PC-9 (cell line): ENCODE measurements at regions of chr1 and their contacts with region 1.

Region 1: DNA sequence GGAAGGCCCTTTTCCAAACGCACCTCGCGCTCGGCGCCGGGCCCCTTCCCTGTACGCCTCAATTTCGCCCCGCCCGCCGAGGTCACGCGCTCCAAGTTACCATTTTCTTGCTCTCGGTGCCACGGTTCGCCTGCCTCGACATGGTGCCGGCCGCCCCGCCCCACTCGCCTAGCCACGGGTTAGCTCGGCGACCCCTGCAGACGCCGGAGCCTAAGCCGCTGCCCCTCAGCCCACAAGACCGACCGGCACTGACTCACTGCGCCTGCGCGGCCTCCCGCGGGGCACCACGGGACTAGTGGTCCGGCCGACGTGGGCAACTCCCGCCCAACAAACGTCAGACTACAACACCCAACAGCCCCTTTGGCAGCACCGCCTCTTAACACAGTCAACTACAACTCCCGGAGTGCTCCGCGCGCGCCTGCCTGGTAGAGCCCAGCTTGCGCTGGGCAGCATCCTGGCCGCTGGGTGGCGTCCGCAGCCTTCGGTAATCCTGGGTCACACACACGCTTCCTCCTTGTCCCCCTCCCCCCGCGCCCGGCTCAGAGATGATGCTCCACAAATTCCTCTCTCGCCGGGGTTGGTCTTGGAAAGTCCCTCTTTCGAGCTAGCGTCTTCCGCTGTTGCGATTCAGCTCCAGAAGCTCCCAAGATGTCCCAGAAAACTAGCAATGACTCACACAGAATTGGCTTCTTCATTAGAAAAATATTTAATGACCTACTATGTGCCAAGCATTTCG is at the start of gene TRAPPC3:
- DNase-seq: peak; percentile 98 to 100
- H3K4me3 ChIP-seq: peak within 1 kb of the TSS; percentile 67
- H3K27ac ChIP-seq: peak within 1 kb of the TSS; percentile 95
- H3K4me1 ChIP-seq: peaks cover 34% of the 10 kb centered on the region
- H3K27me3 ChIP-seq: no peaks in the 10 kb centered on the region
- CTCF ChIP-seq: peak; percentile 89
- total RNA-seq, gene TRAPPC3: 112 and 116 TPM in 2 replicates

Region 2: DNA sequence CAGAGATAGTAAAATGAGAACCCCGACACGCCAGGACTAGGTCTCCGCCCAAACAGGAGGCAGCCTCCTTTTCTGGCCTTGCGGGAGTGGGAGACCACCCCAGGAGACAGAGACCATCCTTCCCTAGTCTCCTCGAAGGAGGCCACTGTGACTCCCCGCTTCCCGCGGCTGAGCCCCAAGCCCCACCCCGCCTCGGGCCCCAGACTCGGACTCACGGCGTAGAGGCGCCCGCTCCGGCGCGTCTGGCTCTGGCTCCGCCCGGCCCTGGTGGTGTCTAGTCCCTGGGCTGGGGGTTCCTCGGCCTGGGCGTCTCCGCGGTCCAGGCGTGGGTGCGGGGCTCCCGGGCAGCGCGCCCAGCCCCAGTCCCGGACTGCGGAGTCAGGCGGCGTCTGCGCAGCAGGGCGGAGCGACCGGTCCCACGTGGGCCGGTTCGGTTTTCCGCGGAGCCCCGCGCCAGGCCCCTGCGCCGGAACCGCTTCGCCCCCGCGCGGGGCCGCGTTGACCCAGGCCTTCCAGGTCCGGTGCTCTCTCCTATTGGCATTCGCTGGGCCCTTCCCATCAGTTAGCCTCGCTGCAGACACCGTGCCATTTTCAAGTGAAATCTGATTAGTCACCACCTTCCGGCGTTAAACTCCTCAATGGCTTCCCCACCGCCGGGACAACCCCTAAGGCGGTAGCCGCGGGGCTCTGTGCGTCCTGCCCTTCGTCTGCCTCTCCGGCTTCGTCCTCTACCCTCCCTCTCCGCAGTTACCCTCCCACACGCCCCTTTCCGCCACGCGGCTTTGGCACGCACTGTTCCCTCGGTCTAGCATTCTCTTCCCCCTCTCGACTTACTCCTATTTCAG is 430.7 kb before region 1 on chr1 and contains the start of gene C1orf216:
- CTCF ChIA-PET with region 1: no interaction called
- POLR2A ChIA-PET with region 1: no interaction called
- intact Hi-C with region 1: no loop called
- DNase-seq: peak in 1 of 2 experiments; percentile 68
- H3K4me3 ChIP-seq: peak within 1 kb of the TSS; percentile 75
- H3K27ac ChIP-seq: no peak within 1 kb of the TSS
- H3K4me1 ChIP-seq: no peaks in the 10 kb centered on the region
- H3K27me3 ChIP-seq: no peaks in the 10 kb centered on the region
- CTCF ChIP-seq: no peak
- total RNA-seq, gene C1orf216: 7.6 and 9.9 TPM in 2 replicates

Region 3: GRCh38 chr1:36109041-36109679 is 40.2 kb before region 1 on chr1:
- CTCF ChIA-PET with region 1: no interaction called
- POLR2A ChIA-PET with region 1: no interaction called
- intact Hi-C with region 1: no loop called
- DNase-seq: peak; percentile 63 to 77
- H3K4me3 ChIP-seq: no peak overlapping the region
- H3K27ac ChIP-seq: no peak overlapping the region
- H3K4me1 ChIP-seq: peaks cover 17% of the 10 kb centered on the region
- H3K27me3 ChIP-seq: no peaks in the 10 kb centered on the region
- CTCF ChIP-seq: no peak

Region 4: DNA sequence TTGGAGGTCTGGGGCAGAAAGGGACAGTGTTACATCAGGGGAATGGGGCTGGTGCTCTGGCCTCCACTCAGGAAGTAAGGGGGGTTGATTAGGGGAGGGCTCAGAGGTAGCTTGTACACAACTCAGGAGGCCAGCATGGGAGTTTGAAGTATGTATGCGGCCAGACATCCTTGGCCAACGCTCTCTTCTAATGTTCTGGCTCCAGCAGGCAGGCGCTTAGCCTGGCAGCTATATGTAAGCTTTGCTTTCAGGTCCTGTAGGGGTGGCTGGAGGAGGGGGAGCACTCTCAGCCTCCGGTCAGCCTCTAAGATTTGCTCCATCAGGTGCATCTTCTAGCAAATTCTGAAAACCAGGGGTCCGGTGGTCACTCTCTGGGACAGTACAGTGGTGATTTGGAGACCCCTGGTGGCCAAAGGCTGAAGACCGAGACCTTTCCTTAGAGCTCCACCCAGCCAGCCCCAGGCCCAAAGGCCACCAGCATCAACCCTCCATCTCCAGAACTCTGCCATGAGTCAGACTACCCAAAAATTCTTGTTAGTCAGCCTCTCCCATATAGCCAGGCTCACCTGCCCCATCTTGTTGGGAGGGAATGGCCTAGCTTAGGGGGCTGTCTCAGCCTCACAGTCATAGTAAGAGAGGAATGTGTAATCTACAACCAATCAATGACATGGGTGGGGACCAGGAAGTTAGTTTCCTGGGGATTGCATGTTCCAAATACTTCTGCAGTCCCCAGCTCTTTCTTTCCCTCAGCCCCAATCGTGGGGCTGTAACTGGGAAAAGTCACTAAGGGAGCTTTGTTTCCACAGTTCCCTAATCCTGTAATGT is 14.7 kb before region 1 on chr1:
- CTCF ChIA-PET with region 1: interaction called, 16 read pairs
- POLR2A ChIA-PET with region 1: no interaction called
- intact Hi-C with region 1: no loop called
- DNase-seq: peak; percentile 55 to 61
- H3K4me3 ChIP-seq: no peak overlapping the region
- H3K27ac ChIP-seq: peak overlapping the region; percentile 38; the same call in 1 of the 2 replicates
- H3K4me1 ChIP-seq: 0 out of 2 replicates have a peak, but pooled peaks cover 5% of the 10 kb centered on the region
- H3K27me3 ChIP-seq: no peaks in the 10 kb centered on the region
- CTCF ChIP-seq: peak; percentile 78

Region 5: GRCh38 chr1:36217670-36218069 is 68.3 kb after region 1 on chr1:
- CTCF ChIA-PET with region 1: interaction called, 6 read pairs
- POLR2A ChIA-PET with region 1: no interaction called
- intact Hi-C with region 1: loop called (anchors 1 kb)
- DNase-seq: no peak
- H3K4me3 ChIP-seq: no peak overlapping the region
- H3K27ac ChIP-seq: no peak overlapping the region
- H3K4me1 ChIP-seq: peaks cover 3% of the 10 kb centered on the region
- H3K27me3 ChIP-seq: no peaks in the 10 kb centered on the region
- CTCF ChIP-seq: peak; percentile 37; the same call in 1 of the 2 replicates

Region 6: DNA sequence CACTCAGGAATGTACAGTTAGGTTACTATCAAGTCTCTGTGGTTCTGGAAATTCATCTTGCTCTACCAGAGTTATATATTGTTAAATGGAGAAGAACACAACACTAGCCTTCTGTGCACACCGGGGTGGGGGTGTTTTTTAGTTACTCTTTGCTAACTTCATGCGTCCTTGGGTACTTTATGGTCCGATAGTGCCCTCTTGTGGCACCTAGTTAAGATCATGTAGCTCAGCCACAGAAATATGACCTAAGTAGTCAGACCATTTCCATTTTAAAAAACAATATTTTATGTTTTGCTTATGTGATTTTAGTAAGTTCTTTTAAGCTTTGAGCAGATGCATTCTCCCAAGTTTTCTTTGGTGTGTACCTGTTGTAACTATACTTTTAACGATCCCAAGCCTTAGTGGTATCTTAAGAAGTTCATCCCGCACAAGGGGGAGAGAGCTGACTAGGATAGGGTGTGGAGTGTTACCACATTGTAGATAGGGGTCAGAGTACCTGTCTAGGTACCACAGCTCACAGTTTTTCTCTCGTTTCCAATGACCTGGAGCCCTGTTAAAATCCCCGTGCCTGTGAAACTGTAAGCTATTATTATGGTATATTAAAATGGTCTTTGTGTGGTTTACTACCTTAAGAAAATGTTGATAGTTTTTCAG is 136.2 kb after region 1 on chr1:
- CTCF ChIA-PET with region 1: interaction called, 23 read pairs
- POLR2A ChIA-PET with region 1: interaction called, 8 read pairs
- intact Hi-C with region 1: loop called (anchors 1 kb)
- DNase-seq: peak; percentile 56 to 73
- H3K4me3 ChIP-seq: no peak overlapping the region
- H3K27ac ChIP-seq: peak overlapping the region; percentile 31; the same call in 1 of the 2 replicates
- H3K4me1 ChIP-seq: no peaks in the 10 kb centered on the region
- H3K27me3 ChIP-seq: no peaks in the 10 kb centered on the region
- CTCF ChIP-seq: peak; percentile 85

Region 7: DNA sequence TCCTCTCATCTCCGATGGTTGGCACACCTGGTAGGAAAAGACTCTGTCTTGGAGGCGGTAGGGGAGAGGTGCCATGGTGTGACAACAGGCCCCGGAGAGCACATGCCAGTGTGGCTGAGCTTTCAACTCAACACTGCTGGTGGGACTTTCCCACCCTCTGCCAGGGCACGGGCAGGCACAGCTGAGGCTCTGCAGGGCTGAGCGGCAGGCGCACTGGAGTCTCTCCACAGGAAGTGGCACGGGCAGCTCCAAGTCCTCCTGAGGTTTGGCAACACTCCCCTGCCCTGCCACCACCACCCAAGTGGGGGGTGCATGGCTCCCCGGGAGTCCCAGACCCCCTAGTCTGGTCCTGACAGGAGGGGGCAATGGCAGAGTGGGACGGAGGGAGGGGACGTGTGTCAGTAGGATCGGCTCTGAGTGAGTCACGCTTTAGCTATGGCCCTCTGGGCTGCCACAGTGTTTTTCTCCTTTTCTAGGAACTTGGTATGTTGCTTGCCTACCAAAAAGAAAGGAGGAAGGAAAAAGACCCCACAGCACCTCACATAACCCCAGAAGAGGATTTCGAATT is 201.3 kb after region 1 on chr1:
- CTCF ChIA-PET with region 1: no interaction called
- POLR2A ChIA-PET with region 1: no interaction called
- intact Hi-C with region 1: loop called (anchors 1 kb)
- DNase-seq: peak; percentile 89 to 91
- H3K4me3 ChIP-seq: peak overlapping the region; percentile 41; the same call in 1 of the 2 replicates
- H3K27ac ChIP-seq: peak overlapping the region; percentile 97
- H3K4me1 ChIP-seq: peaks cover 67% of the 10 kb centered on the region
- H3K27me3 ChIP-seq: no peaks in the 10 kb centered on the region
- CTCF ChIP-seq: no peak

Region 8: GRCh38 chr1:37553927-37554808 is 1404.8 kb after region 1 on chr1 and contains the start of gene SNIP1:
- CTCF ChIA-PET with region 1: no interaction called
- POLR2A ChIA-PET with region 1: no interaction called
- intact Hi-C with region 1: no loop called
- DNase-seq: peak; percentile 89 to 90
- H3K4me3 ChIP-seq: peak within 1 kb of the TSS; percentile 78
- H3K27ac ChIP-seq: peak within 1 kb of the TSS; percentile 41; the same call in 1 of the 2 replicates
- H3K4me1 ChIP-seq: peaks cover 16% of the 10 kb centered on the region
- H3K27me3 ChIP-seq: no peaks in the 10 kb centered on the region
- CTCF ChIP-seq: no peak
- total RNA-seq, gene SNIP1: 23.5 and 32.5 TPM in 2 replicates